ENCODE measurements at regions of chr16 and their contacts with region 1.

Region 1: GRCh38 chr16:8660841-8661301 is 13.5 kb upstream of the ABAT start:
- DNase-seq: peak; percentile 83
- H3K4me3 ChIP-seq: no peak overlapping the region
- H3K27ac ChIP-seq: no peak overlapping the region
- H3K4me1 ChIP-seq: peaks cover 9% of the 10 kb centered on the region
- H3K27me3 ChIP-seq: no peaks in the 10 kb centered on the region
- CTCF ChIP-seq: peak; percentile 73

Region 2: DNA sequence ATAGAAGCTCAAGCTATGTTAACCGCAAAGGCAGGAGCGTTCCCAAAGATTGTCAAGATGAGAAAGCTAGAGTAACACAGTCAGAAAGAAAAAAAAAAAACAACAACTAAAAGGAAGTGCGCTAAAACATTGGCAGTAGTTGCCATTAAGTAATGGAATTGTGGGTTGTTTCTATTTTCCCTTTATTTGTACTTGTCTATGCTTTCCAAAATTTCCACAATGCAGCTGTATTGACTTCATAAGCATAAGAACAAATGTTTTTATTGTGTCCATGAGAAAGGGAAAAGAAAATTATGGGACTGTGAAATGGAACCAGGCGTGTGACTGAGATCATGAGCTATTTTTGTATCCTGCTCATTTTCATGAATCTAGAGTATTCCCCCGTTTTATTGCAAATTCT is 223.9 kb before region 1 on chr16:
- CTCF ChIA-PET with region 1: no interaction called
- POLR2A ChIA-PET with region 1: no interaction called
- intact Hi-C with region 1: no loop called
- DNase-seq: no peak
- H3K4me3 ChIP-seq: no peak overlapping the region
- H3K27ac ChIP-seq: no peak overlapping the region
- H3K4me1 ChIP-seq: no peaks in the 10 kb centered on the region
- H3K27me3 ChIP-seq: peaks cover 3% of the 10 kb centered on the region
- CTCF ChIP-seq: no peak

Region 3: GRCh38 chr16:8628981-8629725 is 31.7 kb before region 1 on chr16:
- CTCF ChIA-PET with region 1: interaction called, 16 read pairs
- POLR2A ChIA-PET with region 1: no interaction called
- intact Hi-C with region 1: no loop called
- DNase-seq: no peak
- H3K4me3 ChIP-seq: no peak overlapping the region
- H3K27ac ChIP-seq: no peak overlapping the region
- H3K4me1 ChIP-seq: peaks cover 8% of the 10 kb centered on the region
- H3K27me3 ChIP-seq: no peaks in the 10 kb centered on the region
- CTCF ChIP-seq: no peak

Region 4: DNA sequence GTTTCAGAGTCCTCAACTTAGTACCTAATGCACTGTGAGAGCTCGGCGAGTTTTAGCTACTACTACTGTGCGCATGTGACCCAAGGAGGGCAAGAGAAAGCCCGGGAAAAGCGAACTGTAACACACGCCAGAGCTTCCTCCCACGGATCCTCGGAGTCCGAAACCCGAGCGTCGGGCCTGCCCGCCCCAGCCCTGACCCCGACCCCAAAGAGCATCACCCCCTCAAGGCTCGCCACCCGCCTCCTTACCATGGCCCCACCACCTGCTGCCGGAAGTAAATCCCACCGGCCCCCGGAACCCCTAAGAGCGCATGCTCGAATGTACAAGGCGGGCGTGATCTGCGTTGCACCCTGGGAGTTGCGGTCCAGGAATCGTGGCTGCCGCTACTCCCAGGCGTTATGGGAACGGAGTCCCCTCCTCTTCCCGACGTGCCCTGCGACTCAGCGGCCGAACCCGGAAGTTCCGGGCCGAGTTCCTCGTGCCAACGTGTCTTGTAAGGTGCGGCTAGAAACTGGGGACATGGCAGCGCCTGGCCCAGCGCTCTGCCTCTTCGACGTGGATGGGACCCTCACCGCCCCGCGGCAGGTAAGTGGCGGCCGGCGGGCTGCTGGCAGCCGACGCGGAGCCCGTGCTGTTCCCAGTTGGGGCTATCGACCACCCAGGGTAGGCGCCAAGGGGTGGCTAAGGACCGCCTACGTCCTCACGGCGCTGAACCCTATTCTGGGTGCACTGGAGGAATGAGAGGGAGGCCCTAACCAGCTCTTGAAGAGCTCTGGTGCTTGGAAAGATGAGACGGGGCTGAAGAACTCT is 136.7 kb after region 1 on chr16 and contains the starts of genes PMM2 and TMEM186:
- CTCF ChIA-PET with region 1: no interaction called
- POLR2A ChIA-PET with region 1: interaction called, 3 read pairs
- intact Hi-C with region 1: loop called (anchors 1 kb)
- DNase-seq: peak; percentile 98
- H3K4me3 ChIP-seq: peak within 1 kb of the TSS; percentile 79
- H3K27ac ChIP-seq: peak within 1 kb of the TSS; percentile 75
- H3K4me1 ChIP-seq: peaks cover 12% of the 10 kb centered on the region
- H3K27me3 ChIP-seq: no peaks in the 10 kb centered on the region
- CTCF ChIP-seq: no peak
- total RNA-seq, gene PMM2: 44.3 and 54.8 TPM in 2 replicates
- total RNA-seq, gene TMEM186: 13.3 and 13.5 TPM in 2 replicates

Region 5: DNA sequence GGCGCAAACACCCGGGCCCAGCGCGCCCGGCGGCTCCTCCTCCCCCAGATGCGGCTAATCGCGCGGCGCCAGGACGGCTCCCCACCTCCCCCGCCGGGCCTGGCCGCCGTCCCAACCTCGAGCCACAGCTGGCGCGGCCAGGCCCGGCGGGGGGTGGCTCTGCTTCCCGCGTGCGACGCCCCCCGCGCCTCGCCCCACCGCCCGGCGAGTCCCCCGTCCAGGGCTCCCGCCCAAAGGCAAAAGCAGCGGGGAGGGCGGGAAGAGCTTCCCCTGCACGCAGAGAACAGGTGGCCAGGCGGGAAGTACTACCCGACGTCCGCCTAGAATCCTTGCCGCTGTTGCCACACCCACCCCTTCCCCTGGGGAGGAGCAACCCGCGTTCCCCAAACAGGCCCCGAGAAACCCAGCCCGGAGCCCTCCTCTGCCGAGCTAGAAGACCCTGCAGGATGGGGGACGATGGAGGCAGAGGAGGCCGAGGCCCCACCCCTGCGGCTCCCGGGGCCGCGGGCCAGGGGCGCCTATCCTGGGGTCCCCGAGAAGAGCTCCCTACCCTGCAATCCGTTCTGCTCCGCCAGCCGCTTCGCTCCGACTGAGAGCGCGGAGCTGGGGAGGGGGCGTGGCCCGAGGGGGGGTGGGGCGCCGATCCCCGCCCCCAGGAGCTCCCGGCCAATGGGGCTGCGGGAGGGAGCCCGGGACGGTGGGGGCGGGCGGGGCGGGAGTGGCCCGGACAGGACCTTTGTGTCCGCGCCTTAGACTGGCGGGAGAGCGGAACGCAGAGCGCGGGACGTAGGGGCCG is 207.7 kb after region 1 on chr16 and contains the start of gene CARHSP1:
- CTCF ChIA-PET with region 1: interaction called, 3 read pairs
- POLR2A ChIA-PET with region 1: no interaction called
- intact Hi-C with region 1: loop called (anchors 5 kb)
- DNase-seq: peak; percentile 97
- H3K4me3 ChIP-seq: peak within 1 kb of the TSS; percentile 90
- H3K27ac ChIP-seq: peak within 1 kb of the TSS; percentile 96
- H3K4me1 ChIP-seq: peaks cover 49% of the 10 kb centered on the region
- H3K27me3 ChIP-seq: no peaks in the 10 kb centered on the region
- CTCF ChIP-seq: no peak
- total RNA-seq, gene CARHSP1: 316 and 329 TPM in 2 replicates

Region 6: GRCh38 chr16:8880839-8881510 is 220.1 kb after region 1 on chr16:
- CTCF ChIA-PET with region 1: no interaction called
- POLR2A ChIA-PET with region 1: no interaction called
- intact Hi-C with region 1: loop called (anchors 1 kb)
- DNase-seq: no peak
- H3K4me3 ChIP-seq: no peak overlapping the region
- H3K27ac ChIP-seq: no peak overlapping the region
- H3K4me1 ChIP-seq: no peaks in the 10 kb centered on the region
- H3K27me3 ChIP-seq: no peaks in the 10 kb centered on the region
- CTCF ChIP-seq: no peak

Region 7: DNA sequence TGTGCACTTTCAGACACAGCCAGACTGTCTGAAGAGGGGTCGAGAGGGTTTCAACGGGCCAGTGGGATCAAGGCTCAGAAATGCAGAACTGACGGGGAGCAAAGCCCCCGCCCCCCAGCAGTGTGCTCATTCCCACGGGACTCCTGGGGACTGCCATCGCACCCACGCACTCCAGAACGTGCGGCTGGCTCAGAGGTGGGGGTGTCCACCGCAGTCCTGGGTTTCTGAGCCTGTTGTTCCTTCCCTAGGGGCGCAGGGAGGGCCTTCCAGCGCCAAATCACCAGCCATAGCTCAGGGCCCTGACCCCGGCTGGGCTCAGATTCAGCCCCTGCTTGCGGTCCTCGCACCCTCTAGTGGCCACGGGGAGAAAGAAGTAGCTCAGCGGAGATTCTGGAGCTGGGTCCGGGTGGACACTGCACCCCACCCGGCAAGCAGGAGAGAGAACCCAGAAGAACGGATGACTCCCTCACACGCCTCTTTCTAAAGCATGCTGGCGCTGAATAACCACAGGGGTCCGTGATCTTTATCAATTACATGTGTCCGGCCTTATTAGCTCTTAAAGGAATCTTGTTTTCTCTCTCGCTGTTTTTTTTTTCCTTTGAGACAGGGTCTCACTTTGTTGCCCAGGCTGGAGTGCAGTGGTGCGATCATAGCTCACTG is 347.9 kb after region 1 on chr16:
- CTCF ChIA-PET with region 1: no interaction called
- POLR2A ChIA-PET with region 1: no interaction called
- intact Hi-C with region 1: loop called (anchors 5 kb)
- DNase-seq: peak; percentile 80
- H3K4me3 ChIP-seq: peak overlapping the region; percentile 33
- H3K27ac ChIP-seq: no peak overlapping the region
- H3K4me1 ChIP-seq: no peaks in the 10 kb centered on the region
- H3K27me3 ChIP-seq: no peaks in the 10 kb centered on the region
- CTCF ChIP-seq: peak; percentile 90

Region 8: DNA sequence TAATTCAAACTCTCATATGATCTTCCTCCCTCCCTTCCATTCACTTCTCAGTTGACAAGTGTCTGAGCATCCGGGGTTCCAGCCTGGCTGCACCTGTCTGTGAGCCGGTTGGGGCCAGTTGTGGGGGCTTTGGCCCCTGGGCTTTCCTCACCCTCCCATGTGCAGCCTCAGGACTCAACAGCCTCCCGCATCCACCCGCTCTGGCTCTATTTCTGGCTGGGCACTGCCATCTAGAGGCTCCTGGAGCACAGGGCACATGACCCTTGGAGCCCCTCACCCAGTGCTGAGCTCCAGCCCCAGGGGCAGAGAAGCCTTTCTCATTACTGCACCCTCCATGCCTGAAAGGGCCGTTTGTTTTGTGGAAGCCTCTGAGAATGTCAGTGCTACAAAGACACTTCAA is 473.9 kb after region 1 on chr16:
- CTCF ChIA-PET with region 1: no interaction called
- POLR2A ChIA-PET with region 1: no interaction called
- intact Hi-C with region 1: loop called (anchors 5 kb)
- DNase-seq: peak; percentile 68
- H3K4me3 ChIP-seq: no peak overlapping the region
- H3K27ac ChIP-seq: no peak overlapping the region
- H3K4me1 ChIP-seq: no peaks in the 10 kb centered on the region
- H3K27me3 ChIP-seq: no peaks in the 10 kb centered on the region
- CTCF ChIP-seq: peak; percentile 74